ENCODE measurements at regions of chr18 and their contacts with region 1.

Region 1: DNA sequence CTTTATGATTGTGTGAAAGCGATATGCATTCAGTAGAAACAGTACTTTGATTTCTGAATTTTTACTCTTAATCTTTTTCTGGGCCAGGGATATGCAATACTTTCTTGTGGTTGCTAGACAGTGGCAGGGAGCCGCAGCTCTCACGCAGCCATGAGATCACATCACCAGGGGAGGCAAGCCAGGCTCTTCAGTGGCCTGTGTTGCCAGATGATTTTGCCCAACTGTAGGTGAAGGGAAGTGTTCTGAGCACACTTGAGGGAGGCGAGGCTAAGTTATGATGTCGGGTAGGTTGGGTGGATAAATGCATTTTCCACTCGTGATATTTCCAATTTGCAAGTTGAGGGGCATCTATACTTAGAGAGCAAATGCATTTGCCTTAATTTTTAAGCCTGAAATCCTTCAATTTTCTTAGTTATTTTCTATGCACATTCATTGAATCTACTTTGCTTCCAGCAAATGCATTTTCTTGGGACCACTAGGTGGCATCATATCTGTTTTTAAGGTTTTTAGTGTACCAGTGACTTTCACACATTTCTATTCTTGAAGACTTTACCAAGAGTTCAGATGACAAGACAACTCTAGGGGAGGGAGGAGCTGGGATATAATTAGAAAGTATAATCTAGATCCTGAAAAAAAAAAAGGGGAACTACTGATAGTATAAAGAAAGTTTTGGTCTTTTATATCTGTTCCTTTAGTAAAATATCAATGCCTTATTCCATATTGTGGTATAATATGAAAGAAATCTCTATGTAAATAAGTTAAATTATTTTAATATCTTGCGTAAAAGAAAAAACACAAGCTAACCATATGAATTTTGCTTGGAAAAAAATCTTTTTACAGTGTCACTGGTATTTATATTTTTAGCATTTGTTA is 643.3 kb downstream of the SOCS6 start:
- DNase-seq: no peak
- H3K4me3 Mint-ChIP-seq: no peak overlapping the region
- H3K27ac Mint-ChIP-seq: no peak overlapping the region
- H3K4me1 Mint-ChIP-seq: no peaks in the 10 kb centered on the region
- H3K27me3 Mint-ChIP-seq: no peaks in the 10 kb centered on the region

Region 2: DNA sequence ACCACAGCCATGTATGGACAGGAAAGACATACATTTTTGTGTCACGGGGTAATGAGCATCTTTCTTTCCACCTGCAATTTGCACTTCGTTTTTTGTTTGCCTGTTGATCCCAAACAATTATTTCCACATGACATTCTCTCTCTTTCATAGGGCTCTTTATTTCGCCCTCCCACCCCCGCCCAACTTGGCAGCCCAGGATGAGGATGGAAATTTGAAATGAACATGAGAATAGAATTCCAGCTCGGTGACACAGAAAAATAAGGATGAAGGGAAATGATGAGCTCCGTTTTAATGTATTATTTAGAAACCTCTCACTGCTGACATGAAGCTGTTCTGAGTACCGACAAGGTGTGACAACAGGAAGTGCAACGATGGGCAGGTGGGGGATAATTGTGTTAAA is 200.0 kb before region 1 on chr18:
- CTCF ChIA-PET with region 1: no interaction called
- POLR2A ChIA-PET with region 1: no interaction called
- intact Hi-C with region 1: no loop called
- DNase-seq: no peak
- H3K4me3 Mint-ChIP-seq: no peak overlapping the region
- H3K27ac Mint-ChIP-seq: no peak overlapping the region
- H3K4me1 Mint-ChIP-seq: no peaks in the 10 kb centered on the region
- H3K27me3 Mint-ChIP-seq: no peaks in the 10 kb centered on the region

Region 3: DNA sequence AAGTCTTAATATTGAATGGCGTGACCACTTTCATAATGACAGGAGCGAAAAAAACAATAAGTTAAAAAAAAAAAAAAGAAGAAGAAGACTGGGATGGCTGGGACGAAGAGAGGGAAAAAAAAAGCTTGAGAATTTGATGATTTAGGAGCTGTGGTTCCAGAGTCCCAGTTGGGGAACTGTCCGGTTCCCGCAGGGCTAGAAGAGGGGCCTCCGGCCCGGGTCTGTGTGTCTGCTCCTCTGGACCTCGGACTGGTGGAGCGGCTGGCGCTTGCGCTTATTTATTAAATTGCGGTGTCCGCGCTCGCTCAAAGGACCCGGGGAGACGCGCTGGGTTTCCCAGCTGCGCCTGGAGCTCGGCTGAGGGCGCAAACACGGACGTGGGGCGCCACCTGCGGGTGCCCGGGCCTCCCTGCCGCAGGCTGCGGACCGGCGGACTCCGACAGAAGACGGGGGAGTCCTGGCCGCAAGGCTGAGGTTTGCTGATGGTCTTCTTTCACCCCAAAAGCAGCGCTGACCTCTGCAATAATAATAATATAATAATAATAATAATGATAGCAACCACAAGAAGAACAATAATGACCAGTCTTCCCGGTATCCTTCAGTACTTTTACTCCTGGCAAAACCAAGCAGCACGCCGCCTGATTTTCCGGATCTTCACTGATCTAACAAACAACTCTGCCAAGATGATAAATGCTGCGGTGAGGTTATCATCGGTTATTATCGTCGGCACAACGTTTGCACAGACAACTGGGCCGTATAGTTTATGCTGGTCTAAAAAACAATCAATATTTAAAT is 1612.1 kb after region 1 on chr18 and contains the start of gene CBLN2:
- CTCF ChIA-PET with region 1: no interaction called
- POLR2A ChIA-PET with region 1: no interaction called
- intact Hi-C with region 1: loop called (anchors 10 kb)
- DNase-seq: peak; percentile 61
- H3K4me3 Mint-ChIP-seq: no peak within 1 kb of the TSS
- H3K27ac Mint-ChIP-seq: no peak within 1 kb of the TSS
- H3K4me1 Mint-ChIP-seq: no peaks in the 10 kb centered on the region
- H3K27me3 Mint-ChIP-seq: peaks cover 26% of the 10 kb centered on the region
- total RNA-seq, gene CBLN2: not detected

Region 4: GRCh38 chr18:72672364-72673184 is 1740.4 kb after region 1 on chr18:
- CTCF ChIA-PET with region 1: no interaction called
- POLR2A ChIA-PET with region 1: no interaction called
- intact Hi-C with region 1: loop called (anchors 10 kb)
- DNase-seq: no peak
- H3K4me3 Mint-ChIP-seq: no peak overlapping the region
- H3K27ac Mint-ChIP-seq: no peak overlapping the region
- H3K4me1 Mint-ChIP-seq: no peaks in the 10 kb centered on the region
- H3K27me3 Mint-ChIP-seq: peaks cover 1% of the 10 kb centered on the region

Measured in activated CD4-positive, alpha-beta memory T cell treated with anti-CD3 and anti-CD28 coated beads for 36 hours (primary cell).